SK-N-SH (cell line): ENCODE measurements at regions of chr7 and their contacts with region 1.

Region 1: DNA sequence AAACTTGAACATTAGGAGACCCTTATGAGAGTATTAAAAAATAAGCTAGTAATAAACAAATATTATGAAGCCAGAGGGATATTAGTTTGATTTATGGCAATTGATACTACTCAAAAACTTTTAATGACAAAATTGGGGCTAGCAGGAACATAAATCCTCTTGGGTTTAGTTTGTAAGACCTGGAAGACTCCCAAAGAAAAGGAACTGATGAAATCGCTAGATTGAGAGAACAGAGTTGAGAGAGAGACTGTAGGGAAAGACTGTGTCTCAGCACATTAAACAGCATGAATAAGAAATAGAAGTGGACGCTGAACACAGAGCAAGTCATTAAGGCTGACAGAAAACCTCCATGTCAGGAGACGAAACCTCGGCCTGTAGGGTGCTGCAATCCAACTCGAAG is 56.4 kb downstream of the ICA1 start:
- DNase-seq: no peak
- H3K4me3 ChIP-seq: no peak overlapping the region
- H3K27ac ChIP-seq: peak overlapping the region in 1 of 2 experiments; percentile 90; a peak in 2 of 4 replicates
- H3K4me1 ChIP-seq: peaks cover 0 to 44% of the 10 kb centered on the region in 2 experiments; a peak in 2 of 4 replicates
- H3K27me3 ChIP-seq: no peaks in the 10 kb centered on the region; the same call in 1 of the 2 replicates
- CTCF ChIP-seq: no peak
- EP300 ChIP-seq: no peak
- RAD21 ChIP-seq: no peak

Region 2: DNA sequence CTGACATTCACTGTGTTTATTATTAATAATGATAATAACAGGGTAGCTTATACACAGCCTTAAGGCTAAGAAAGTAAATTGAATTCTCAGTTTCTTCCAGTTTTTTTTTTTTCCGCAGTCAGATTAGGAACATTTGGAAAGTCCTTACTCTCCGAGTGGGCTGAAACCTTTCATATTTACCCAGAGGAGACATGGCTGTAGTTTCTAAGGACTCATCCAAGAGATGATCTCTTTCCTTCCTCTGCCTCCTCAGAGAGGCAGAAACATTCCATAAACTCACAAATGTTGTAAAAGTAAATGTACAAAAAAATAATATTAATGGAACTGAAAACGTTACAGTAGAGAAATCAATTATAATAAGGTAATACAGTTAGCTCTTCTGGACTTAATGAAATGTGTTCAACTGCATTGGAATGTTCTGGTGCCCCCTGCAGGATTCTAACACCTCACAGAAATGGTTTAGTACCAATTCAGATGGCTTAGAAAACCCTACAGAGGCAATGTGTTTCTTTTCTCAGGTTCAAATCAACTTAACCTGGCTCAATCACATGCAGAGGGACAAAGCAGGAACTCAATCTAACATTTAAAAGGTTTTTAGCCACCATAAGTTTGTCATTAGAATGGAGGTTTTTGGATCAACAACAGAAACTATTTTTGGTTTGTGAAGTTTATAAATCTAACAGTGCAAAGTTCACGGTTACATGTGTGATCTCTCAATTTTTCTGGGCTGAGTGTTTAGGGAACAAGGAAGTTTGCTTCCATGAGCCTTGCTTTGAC is 15.2 kb before region 1 on chr7:
- CTCF ChIA-PET with region 1: interaction called, 15 read pairs
- POLR2A ChIA-PET with region 1: no interaction called
- DNase-seq: peak; percentile 60
- H3K4me3 ChIP-seq: no peak overlapping the region
- H3K27ac ChIP-seq: peak overlapping the region in 1 of 2 experiments; percentile 60; a peak in 2 of 4 replicates
- H3K4me1 ChIP-seq: peaks cover 0 to 31% of the 10 kb centered on the region in 2 experiments; a peak in 2 of 4 replicates
- H3K27me3 ChIP-seq: no peaks in the 10 kb centered on the region
- CTCF ChIP-seq: peak; percentile 89
- EP300 ChIP-seq: 0 out of 4 replicates have a peak, but pooled peaks of 1 of the 2 experiments have one; percentile 10
- RAD21 ChIP-seq: peak; percentile 82

Region 3: GRCh38 chr7:8217200-8218068 is 11.9 kb after region 1 on chr7:
- CTCF ChIA-PET with region 1: interaction called, 33 read pairs
- POLR2A ChIA-PET with region 1: interaction called, 3 read pairs
- DNase-seq: peak; percentile 28
- H3K4me3 ChIP-seq: no peak overlapping the region; a peak in 1 of 4 replicates
- H3K27ac ChIP-seq: peak overlapping the region in 1 of 2 experiments; percentile 93; a peak in 2 of 4 replicates
- H3K4me1 ChIP-seq: peaks cover 0 to 67% of the 10 kb centered on the region in 2 experiments; a peak in 2 of 4 replicates
- H3K27me3 ChIP-seq: no peaks in the 10 kb centered on the region
- CTCF ChIP-seq: peak; percentile 90
- EP300 ChIP-seq: no peak
- RAD21 ChIP-seq: peak; percentile 89

Region 4: DNA sequence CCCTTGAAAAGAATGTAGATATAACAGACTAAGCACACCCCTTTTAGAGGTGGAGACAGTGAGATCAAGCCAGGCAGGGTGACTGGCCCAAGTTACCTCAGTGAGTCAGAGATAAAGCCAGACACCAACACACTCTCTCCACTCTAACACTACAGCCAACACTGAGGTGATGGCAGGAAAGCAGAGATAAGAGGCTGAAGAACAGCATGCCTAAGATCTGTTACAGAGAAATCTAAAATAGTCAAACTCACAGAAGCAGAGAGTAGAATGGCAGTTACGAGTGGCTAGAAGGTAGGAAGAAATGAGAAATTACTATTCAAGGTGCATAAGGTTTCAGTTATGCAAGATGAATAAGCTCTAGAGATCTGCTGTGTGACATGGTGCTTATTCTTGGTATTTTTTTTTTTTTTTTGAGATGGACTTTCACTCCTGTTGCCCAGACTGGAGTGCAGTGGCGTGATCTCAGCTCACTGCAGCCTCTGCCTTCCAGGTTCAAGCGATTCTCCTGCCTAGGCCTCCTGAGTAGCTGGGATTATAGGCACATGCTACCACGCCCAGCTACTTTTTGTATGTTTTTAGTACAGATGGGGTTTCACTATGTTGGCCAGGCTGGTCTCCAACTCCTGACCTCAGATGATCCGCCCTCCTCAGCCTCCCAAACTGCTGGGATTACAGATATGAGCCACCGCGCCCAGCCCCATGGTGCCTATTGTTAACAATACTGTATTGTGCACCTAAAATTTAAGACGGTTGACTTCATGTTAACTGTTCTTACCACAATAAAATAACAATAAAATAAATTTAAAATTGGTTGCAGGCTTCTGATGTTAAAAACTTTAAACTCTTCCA is 27.7 kb after region 1 on chr7:
- CTCF ChIA-PET with region 1: no interaction called
- POLR2A ChIA-PET with region 1: no interaction called
- DNase-seq: no peak
- H3K4me3 ChIP-seq: no peak overlapping the region
- H3K27ac ChIP-seq: peak overlapping the region in 1 of 2 experiments; percentile 100; a peak in 2 of 4 replicates
- H3K4me1 ChIP-seq: peaks cover 0 to 60% of the 10 kb centered on the region in 2 experiments; a peak in 2 of 4 replicates
- H3K27me3 ChIP-seq: no peaks in the 10 kb centered on the region
- CTCF ChIP-seq: no peak
- EP300 ChIP-seq: peak in 1 of 2 experiments; percentile 52; a peak in 1 of 4 replicates
- RAD21 ChIP-seq: no peak